ENCODE measurements at regions of chr1 and their contacts with region 1.

Region 1: DNA sequence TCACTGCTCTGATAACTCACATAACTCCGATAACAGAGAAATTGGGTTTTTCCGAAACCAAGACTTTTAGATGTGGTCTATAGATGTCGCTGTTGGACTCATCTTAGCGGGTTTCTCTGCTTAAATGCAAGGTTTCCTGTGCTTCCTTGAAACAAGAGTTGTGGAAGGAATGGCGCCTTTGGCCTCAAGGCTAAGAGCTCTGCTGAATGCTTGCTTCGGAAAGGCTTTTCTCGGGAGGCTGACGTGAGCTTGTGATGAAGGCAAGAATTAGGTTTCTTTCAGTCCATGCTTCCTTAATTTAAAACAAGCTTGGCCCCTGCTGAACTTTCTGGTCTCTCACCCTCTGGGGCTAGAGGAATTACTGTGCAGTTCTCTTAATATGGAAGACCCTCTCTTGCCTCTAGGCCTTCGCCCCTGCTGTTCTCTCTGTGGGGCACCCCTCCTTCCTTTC is 113.5 kb downstream of the MAP3K21 start:
- DNase-seq: no peak
- H3K4me3 ChIP-seq: no peak overlapping the region
- H3K27ac ChIP-seq: no peak overlapping the region
- H3K4me1 ChIP-seq: no peaks in the 10 kb centered on the region
- H3K27me3 ChIP-seq: peaks cover 27% of the 10 kb centered on the region
- CTCF ChIP-seq: peak; percentile 70

Region 2: DNA sequence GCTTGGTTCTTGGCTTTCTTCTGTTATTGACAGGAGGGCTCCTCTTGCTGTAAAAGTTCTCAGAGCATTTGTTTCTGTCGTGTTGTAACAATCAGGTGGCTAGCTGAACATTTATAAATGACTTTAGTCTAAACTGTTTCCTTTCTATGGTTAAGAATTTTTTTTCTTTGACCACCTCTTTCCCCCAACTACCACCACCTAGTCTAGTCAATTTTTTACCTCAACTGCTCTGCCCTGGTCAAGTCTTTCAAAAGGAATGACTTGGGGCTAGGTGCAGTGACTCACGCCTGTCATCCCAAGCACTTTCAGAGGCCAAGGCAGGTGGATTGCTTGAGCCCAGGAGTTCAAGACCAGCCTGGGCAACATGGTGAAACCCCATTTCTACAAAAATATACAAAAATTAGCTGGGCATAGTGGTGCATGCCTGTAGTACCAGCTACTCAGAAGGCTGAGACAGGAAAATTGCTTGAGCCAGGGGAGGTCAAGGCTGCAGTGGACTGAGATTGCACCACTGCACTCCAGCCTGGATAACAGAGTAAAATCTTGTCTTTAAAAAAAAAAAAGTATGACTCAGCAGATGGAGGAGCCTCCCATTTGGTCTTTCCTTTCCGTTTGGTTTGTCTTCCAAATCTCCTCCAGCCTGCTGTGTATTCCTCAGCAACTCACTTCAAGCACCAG is 72.7 kb before region 1 on chr1:
- intact Hi-C with region 1: no loop called
- DNase-seq: no peak
- H3K4me3 ChIP-seq: no peak overlapping the region
- H3K27ac ChIP-seq: no peak overlapping the region
- H3K4me1 ChIP-seq: no peaks in the 10 kb centered on the region
- H3K27me3 ChIP-seq: peaks cover 27% of the 10 kb centered on the region
- CTCF ChIP-seq: no peak

Region 3: DNA sequence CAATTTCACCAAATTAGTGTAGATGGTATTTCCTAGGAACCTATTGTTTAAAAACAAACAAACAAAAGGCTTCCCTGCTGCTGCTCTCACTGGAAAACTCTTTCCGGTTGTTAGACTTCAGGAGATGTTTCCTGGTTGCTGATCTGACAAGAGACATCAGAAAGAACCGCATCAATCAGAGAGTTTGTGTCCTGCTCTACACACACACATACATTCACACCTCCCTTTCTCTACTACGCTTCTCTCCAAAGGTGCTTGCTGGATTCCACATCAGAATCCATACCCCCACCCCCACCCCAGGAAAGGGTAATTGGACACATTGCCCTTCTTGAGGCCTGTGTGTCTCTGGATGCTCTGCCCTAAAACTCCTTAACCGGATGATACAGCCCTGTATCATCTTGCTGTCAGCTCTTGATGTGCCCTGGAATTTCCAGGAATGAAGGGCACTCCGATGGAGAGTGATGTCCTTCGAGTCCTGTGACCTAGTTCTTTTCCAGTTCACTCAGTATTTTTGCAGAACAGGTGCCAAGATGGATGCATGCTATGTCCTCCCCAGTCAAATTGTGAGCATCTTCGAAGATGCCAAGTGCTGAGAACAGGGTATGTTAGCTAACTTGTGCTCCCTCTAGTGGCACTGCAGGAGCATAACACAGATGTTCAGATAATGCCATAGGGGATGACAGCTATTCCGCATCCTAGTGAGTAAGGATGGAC is 349.8 kb after region 1 on chr1:
- intact Hi-C with region 1: loop called (anchors 10 kb)
- DNase-seq: no peak
- H3K4me3 ChIP-seq: no peak overlapping the region
- H3K27ac ChIP-seq: no peak overlapping the region
- H3K4me1 ChIP-seq: no peaks in the 10 kb centered on the region
- H3K27me3 ChIP-seq: no peaks in the 10 kb centered on the region
- CTCF ChIP-seq: peak; percentile 86